ENCODE measurements at regions of chr20 and their contacts with region 1.

Region 1: DNA sequence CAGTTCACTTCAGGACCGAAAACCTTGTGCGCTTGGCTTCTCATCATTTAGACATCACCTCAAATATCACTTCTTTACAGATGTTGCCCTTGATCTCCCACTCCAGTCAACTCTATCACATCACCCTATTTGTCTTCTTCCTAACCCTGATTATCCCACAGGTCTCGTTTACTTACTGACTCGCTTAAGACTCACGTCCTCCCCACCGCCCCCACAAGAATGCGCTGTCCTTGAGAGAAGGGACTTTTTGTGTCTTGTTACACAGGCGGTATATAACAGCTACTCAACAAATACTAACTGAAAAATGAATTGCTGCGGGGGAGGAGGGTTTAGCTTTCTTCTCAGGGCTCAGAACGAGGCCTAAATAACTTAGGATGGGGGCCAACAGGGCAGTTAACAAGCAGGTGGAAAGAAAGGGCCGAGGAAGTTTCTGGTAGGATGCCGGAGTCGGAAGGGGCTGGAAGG is 527 bp downstream of the TOMM34 start:
- DNase-seq: no peak
- H3K4me3 ChIP-seq: peak overlapping the region; percentile 90
- H3K27ac ChIP-seq: peak overlapping the region; percentile 75
- H3K4me1 ChIP-seq: no peaks in the 10 kb centered on the region
- H3K27me3 ChIP-seq: no peaks in the 10 kb centered on the region
- CTCF ChIP-seq: no peak

Region 2: DNA sequence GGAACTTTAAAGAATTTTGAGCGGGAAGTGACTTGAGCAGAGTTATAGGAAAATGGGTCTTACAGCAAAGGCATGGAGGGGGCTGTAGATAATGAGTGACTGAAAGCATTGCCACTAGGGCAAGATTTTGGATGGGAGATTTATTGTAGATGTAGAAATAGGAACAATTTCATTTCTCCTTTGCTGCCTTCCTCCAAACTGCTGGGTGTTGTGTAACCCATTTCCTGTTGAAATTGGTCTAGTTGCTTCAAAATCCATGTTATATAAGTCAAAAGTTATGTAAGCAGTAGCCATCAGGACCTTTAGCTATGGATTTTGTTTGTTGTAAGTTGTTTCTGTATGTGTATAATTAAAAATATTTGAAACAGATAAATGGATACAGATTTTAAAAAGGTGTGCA is 63.1 kb before region 1 on chr20:
- intact Hi-C with region 1: loop called (anchors 10 kb)
- DNase-seq: no peak
- H3K4me3 ChIP-seq: no peak overlapping the region
- H3K27ac ChIP-seq: no peak overlapping the region
- H3K4me1 ChIP-seq: peaks cover 13% of the 10 kb centered on the region
- H3K27me3 ChIP-seq: no peaks in the 10 kb centered on the region
- CTCF ChIP-seq: no peak

Region 3: GRCh38 chr20:45032276-45032675 is 72.6 kb after region 1 on chr20:
- intact Hi-C with region 1: no loop called
- DNase-seq: no peak
- H3K4me3 ChIP-seq: no peak overlapping the region
- H3K27ac ChIP-seq: no peak overlapping the region
- H3K4me1 ChIP-seq: no peaks in the 10 kb centered on the region
- H3K27me3 ChIP-seq: no peaks in the 10 kb centered on the region
- CTCF ChIP-seq: no peak

Measured in colonic mucosa (tissue), 4 donors.